ENCODE measurements at regions of chr3 and their contacts with region 1.

Region 1: GRCh38 chr3:64030741-64031140 is 7.4 kb upstream of the PSMD6 start:
- DNase-seq: peak; percentile 63
- H3K4me3 Mint-ChIP-seq: peak overlapping the region; percentile 67
- H3K27ac Mint-ChIP-seq: peak overlapping the region; percentile 49
- H3K4me1 Mint-ChIP-seq: peaks cover 7% of the 10 kb centered on the region
- H3K27me3 Mint-ChIP-seq: peaks cover 33% of the 10 kb centered on the region

Region 2: DNA sequence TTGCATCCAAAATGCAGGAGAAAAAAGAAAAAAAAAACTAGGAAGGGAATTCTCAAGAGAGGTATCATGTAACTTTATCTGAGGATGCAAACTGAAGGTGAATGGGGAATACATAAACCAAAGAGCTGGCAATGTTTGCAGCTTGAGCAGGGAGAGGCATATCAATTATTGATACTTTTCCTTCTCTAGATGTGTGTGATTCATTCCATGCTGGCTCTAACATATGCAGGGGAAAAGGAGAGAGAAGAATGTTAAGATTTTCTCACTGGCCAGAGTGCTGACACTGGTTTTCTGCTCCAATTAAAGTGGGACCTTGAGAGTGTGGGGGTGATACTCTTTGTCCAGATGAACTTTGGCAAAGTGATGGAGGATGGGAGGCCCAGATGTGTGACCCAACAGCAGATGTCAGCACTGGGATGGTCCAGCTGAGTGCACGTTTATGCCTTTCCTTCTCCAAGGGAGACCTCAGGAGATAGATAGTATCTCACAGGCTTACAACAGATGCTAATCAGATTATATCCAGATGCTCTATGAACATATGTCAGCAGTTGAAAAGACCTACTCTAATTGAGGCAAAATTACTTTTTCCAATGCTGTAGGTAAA is 42.5 kb after region 1 on chr3:
- intact Hi-C with region 1: no loop called
- DNase-seq: no peak
- H3K4me3 Mint-ChIP-seq: no peak overlapping the region
- H3K27ac Mint-ChIP-seq: no peak overlapping the region
- H3K4me1 Mint-ChIP-seq: peaks cover 5% of the 10 kb centered on the region
- H3K27me3 Mint-ChIP-seq: peaks cover 21% of the 10 kb centered on the region

Region 3: DNA sequence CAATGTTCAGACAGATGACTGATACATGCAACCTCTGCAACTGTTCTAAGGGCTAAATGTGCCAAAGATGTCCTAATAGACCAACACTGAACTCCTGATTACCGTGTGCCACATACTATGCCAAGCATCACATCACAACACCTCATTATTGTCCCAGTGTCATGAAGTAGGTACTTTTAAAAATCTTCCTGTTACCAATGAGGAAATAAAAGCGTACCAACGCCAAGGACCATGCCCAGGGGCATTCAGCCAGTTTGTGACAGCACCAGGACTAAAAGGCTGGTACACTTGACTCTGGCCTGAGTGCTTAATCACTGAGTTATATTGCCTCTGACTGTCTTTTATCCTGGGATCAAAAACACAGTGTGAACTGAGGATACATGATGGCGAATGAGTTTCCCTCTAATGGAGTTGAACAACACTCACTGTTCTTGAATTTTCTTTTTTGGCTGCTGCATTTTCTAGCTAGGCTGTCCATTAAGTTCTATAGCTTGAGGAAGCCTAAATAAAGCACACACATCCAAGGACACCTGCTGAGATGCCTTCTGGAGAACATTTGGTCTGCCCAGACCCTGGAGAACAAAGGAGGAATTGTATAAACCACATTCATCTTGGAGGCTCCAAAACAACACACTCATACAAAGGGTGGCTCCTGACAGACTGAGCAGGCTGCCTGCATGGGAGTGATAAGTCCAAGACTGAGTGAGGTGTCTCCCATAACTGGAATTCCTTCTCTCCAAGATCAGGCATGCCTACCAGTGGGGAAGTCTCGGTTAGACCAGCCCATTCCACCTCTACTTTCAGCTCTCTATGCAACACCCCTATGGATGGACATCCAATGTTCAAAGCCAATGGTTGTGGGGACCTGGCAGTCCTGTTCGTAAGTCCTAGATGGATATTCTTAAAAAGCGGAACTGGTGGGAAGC is 321.2 kb after region 1 on chr3:
- intact Hi-C with region 1: loop called (anchors 5 kb)
- DNase-seq: no peak
- H3K4me3 Mint-ChIP-seq: no peak overlapping the region
- H3K27ac Mint-ChIP-seq: no peak overlapping the region
- H3K4me1 Mint-ChIP-seq: peaks cover 43% of the 10 kb centered on the region
- H3K27me3 Mint-ChIP-seq: peaks cover 6% of the 10 kb centered on the region

Region 4: DNA sequence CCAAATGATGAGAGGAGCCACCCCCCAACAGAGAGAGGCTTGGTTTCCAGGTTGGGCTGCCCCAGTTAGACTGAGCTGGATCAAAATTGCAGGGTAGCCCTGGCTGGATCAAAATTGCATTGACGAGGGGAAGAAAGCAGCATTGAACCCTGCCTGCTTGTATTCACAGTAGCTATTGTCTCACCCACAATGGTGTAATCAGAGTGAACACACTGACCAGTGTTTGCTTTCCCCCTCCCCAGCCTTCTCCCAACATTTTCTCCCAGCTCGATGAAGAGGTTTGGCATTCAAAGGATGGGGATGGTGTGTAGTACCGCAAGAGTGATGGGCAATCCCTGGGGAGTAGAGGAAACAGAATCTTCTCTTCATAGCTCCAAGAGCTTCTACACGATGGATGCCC is 433.2 kb after region 1 on chr3:
- intact Hi-C with region 1: loop called (anchors 1 kb)
- DNase-seq: no peak
- H3K4me3 Mint-ChIP-seq: no peak overlapping the region
- H3K27ac Mint-ChIP-seq: no peak overlapping the region
- H3K4me1 Mint-ChIP-seq: peaks cover 6% of the 10 kb centered on the region
- H3K27me3 Mint-ChIP-seq: peaks cover under 1% of the 10 kb centered on the region

Measured in activated T-helper 1 cell treated with anti-CD3 and anti-CD28 coated beads, Interleukin-12 subunit alpha, Interleukin-12 subunit beta, Interleukin-2, Interleukin-4 antibody, amounts not matched to agents 30 ng/mL and 10 ng/mL and 1 ng/mL, durations not matched to agents 14 hours and 24 hours and 36 hours (primary cell).